ENCODE measurements at regions of chr3 and their contacts with region 1.

Region 1: GRCh38 chr3:4826237-4827100 is 152.8 kb upstream of the BHLHE40 start:
- DNase-seq: peak; percentile 93

Region 2: GRCh38 chr3:4722103-4722502 is 104.4 kb before region 1 on chr3:
- intact Hi-C with region 1: loop called (anchors 2 kb)
- DNase-seq: no peak

Region 3: DNA sequence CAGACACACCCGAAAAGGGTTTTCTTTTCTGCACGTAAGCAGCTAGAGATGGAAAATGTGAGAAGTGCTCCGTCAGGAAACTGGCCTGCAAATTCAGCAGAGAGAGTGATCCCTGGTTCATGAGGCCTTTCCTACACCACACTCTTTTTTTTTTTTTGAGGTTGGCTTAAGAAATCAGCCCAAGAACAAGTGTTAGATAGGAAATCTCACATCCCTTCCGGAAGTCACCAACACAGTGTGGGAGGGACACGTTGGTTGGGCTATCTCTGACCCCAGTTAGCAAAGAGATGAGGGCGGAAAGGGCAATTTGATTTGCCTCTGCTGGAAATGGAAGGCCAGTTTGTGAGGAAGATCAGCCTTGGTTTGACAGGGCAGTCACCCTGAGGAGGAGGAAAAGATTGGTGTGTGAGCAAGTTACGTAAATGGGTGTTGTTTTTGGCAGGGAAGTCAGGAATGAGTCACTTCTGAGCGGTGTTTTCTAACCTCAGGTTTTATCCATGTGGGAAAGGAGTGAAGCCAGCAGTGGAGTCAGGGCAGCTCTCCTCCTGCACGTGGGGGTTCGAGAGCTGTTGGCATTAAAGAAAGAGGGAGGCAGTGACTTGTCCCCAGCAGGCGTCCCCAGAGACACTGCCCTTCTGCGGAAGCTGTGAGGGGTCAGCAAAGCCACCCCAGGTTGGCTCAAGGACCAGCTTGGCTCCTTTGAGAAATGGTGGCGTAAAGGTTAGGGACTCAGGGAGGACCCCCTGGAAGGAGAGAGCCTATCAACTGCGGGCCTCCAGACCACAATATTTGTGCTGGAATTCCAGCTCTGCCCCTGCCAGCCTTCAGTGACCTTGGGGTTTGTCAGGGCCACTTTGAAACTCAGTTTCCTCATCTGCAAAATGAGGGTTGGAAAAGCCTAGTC is 84.8 kb before region 1 on chr3:
- intact Hi-C with region 1: loop called (anchors 5 kb)
- DNase-seq: no peak

Region 4: DNA sequence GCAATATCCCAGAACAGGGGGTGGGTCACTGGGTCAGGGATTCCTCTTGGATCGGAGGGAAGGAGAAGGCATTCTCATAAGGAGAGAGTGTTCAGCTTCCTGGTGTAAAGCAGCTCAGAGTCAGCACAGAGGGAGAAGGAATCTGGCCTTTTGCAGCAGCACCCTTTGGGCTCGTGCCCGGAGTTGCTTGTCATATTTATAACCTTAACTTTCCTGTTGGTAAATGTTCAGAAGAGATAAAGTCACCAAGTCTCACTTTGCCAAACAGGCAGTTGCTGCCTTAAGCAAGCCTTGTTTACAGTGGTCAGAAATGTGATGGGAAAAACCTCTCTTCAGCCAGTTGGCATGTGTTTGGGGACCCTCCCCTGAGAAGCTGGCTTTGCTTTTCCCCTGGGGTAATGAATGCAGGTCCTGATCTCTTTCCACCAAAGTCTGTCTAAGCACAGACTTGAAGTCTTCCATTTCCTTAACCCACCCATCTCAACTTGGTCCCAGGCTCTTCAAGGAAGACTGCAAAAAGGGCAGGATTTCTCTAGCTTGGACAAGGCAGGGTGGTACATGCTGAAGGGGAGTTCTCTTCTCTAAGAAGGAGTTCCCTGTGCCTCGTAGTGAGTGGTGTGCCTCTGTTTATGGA is 54.2 kb before region 1 on chr3:
- intact Hi-C with region 1: loop called (anchors 2 kb)
- DNase-seq: peak; percentile 82

Region 5: GRCh38 chr3:4978204-4978965 is 151.9 kb after region 1 on chr3:
- intact Hi-C with region 1: loop called (anchors 1 kb)
- DNase-seq: peak; percentile 99

Region 6: GRCh38 chr3:5026331-5027218 is 200.1 kb after region 1 on chr3:
- intact Hi-C with region 1: loop called (anchors 5 kb)
- DNase-seq: peak; percentile 94

Region 7: GRCh38 chr3:5057857-5058324 is 231.4 kb after region 1 on chr3:
- intact Hi-C with region 1: loop called (anchors 5 kb)
- DNase-seq: peak; percentile 85